H1 (cell line): ENCODE measurements at regions of chr20 and their contacts with region 1.

Region 1: GRCh38 chr20:37990571-37991151 is 42.6 kb downstream of the TTI1 start:
- DNase-seq: no peak
- H3K4me3 ChIP-seq: no peak overlapping the region
- H3K27ac ChIP-seq: no peak overlapping the region
- H3K4me1 ChIP-seq: no peaks in the 10 kb centered on the region; a peak in 2 of 7 replicates
- H3K27me3 ChIP-seq: no peaks in the 10 kb centered on the region
- CTCF ChIP-seq: no peak
- EP300 ChIP-seq: no peak
- POLR2A ChIP-seq: no peak
- RAD21 ChIP-seq: no peak

Region 2: DNA sequence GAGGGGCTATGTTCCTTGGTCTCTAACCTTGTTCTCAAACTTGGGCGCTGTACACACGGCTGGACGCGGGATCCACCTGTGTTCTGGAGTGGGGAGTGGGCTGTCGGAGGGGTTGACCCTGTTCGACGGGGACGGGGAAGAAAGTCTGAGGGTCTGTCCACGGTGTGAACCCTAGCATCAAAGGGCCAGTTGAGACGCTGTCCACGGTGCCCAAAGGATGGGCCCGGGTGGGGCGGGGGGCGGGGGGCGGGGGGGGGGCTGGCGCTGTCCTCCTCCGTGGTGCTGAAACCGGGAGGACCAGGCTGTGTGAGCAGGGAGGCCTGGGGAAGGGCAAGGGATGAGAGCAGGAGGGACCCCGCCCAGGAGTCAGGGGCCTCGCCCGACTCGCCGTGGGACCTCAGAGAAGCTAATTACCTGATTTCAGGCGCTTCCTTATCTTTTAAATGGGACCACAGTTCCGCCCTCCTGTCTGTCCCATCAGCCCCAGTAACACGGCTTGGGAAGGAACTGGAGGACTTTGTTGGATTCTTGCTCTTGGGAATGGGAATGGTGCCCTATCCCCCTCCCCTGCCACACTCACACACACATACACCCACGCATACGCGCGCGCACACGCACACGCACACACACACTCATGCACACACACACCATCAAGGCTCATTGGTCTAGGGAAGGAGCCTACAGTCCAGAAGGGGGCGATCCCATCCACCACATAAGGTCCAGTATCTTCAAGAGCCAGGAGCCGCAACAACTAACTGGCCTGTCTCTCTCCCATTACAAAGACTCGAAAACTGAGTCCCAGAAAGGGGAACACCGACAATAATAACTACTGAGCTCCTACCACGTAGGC is 88.8 kb before region 1 on chr20:
- CTCF ChIA-PET with region 1: interaction called, 32 read pairs
- POLR2A ChIA-PET with region 1: no interaction called
- DNase-seq: peak in 1 of 2 experiments; percentile 70
- H3K4me3 ChIP-seq: peak overlapping the region in 2 of 4 experiments; percentile 8 to 69; a peak in 4 of 8 replicates
- H3K27ac ChIP-seq: no peak overlapping the region
- H3K4me1 ChIP-seq: peaks cover 6 to 17% (median 11%) of the 10 kb centered on the region in 4 experiments
- H3K27me3 ChIP-seq: no peaks in the 10 kb centered on the region; a peak in 2 of 7 replicates
- CTCF ChIP-seq: peak; percentile 64 to 81 (median 79)
- EP300 ChIP-seq: no peak
- POLR2A ChIP-seq: no peak
- RAD21 ChIP-seq: peak; percentile 79 to 90

Region 3: GRCh38 chr20:37907330-37907676 is 83.4 kb before region 1 on chr20:
- CTCF ChIA-PET with region 1: interaction called, 32 read pairs
- POLR2A ChIA-PET with region 1: interaction called, 3 read pairs
- DNase-seq: no peak
- H3K4me3 ChIP-seq: no peak overlapping the region
- H3K27ac ChIP-seq: no peak overlapping the region
- H3K4me1 ChIP-seq: peaks cover 12 to 31% (median 24%) of the 10 kb centered on the region in 4 experiments; a peak in 6 of 7 replicates
- H3K27me3 ChIP-seq: no peaks in the 10 kb centered on the region; a peak in 2 of 7 replicates
- CTCF ChIP-seq: no peak
- EP300 ChIP-seq: no peak
- POLR2A ChIP-seq: no peak
- RAD21 ChIP-seq: no peak

Region 4: GRCh38 chr20:37925265-37926165 is 65.1 kb before region 1 on chr20:
- CTCF ChIA-PET with region 1: interaction called, 15 read pairs
- POLR2A ChIA-PET with region 1: no interaction called
- DNase-seq: no peak
- H3K4me3 ChIP-seq: no peak overlapping the region
- H3K27ac ChIP-seq: no peak overlapping the region
- H3K4me1 ChIP-seq: peaks cover 0 to 3% (median 1%) of the 10 kb centered on the region in 4 experiments; a peak in 3 of 7 replicates
- H3K27me3 ChIP-seq: no peaks in the 10 kb centered on the region
- CTCF ChIP-seq: no peak
- EP300 ChIP-seq: no peak
- POLR2A ChIP-seq: no peak
- RAD21 ChIP-seq: no peak

Region 5: GRCh38 chr20:37958856-37959520 is 31.7 kb before region 1 on chr20:
- CTCF ChIA-PET with region 1: no interaction called
- POLR2A ChIA-PET with region 1: no interaction called
- DNase-seq: peak in 1 of 2 experiments; percentile 19
- H3K4me3 ChIP-seq: no peak overlapping the region
- H3K27ac ChIP-seq: no peak overlapping the region
- H3K4me1 ChIP-seq: no peaks in the 10 kb centered on the region
- H3K27me3 ChIP-seq: no peaks in the 10 kb centered on the region
- CTCF ChIP-seq: no peak
- EP300 ChIP-seq: no peak
- POLR2A ChIP-seq: no peak
- RAD21 ChIP-seq: no peak